Panc1 (cell line): ENCODE measurements at regions of chr1 and their contacts with region 1.

Region 1: GRCh38 chr1:25796811-25797458 is 3.1 kb upstream of the SELENON start:
- DNase-seq: peak; percentile 43
- ATAC-seq: peak; percentile 64
- H3K4me3 ChIP-seq: no peak overlapping the region
- H3K27ac ChIP-seq: no peak overlapping the region
- H3K4me1 ChIP-seq: 0 out of 2 replicates have a peak, but pooled peaks cover 5% of the 10 kb centered on the region
- H3K27me3 ChIP-seq: no peaks in the 10 kb centered on the region
- CTCF ChIP-seq: peak; percentile 95

Region 2: GRCh38 chr1:25624156-25624555 is 172.8 kb before region 1 on chr1:
- CTCF ChIA-PET with region 1: no interaction called
- POLR2A ChIA-PET with region 1: interaction called, 5 read pairs
- in situ Hi-C with region 1: no loop called
- intact Hi-C with region 1: loop called (anchors 5 kb)
- DNase-seq: no peak
- ATAC-seq: no peak
- H3K4me3 ChIP-seq: no peak overlapping the region
- H3K27ac ChIP-seq: no peak overlapping the region
- H3K4me1 ChIP-seq: no peaks in the 10 kb centered on the region
- H3K27me3 ChIP-seq: peaks cover 4% of the 10 kb centered on the region; the same call in 1 of the 2 replicates
- CTCF ChIP-seq: no peak

Region 3: GRCh38 chr1:26122988-26123973 is 326.3 kb after region 1 on chr1:
- CTCF ChIA-PET with region 1: no interaction called
- POLR2A ChIA-PET with region 1: no interaction called
- in situ Hi-C with region 1: no loop called
- intact Hi-C with region 1: no loop called
- DNase-seq: peak; percentile 93
- ATAC-seq: peak; percentile 86
- H3K4me3 ChIP-seq: no peak overlapping the region
- H3K27ac ChIP-seq: peak overlapping the region; percentile 79
- H3K4me1 ChIP-seq: peaks cover 36% of the 10 kb centered on the region
- H3K27me3 ChIP-seq: no peaks in the 10 kb centered on the region
- CTCF ChIP-seq: no peak